Testis (tissue), 5 donors: ENCODE measurements at regions of chr2 and their contacts with region 1.

Region 1: DNA sequence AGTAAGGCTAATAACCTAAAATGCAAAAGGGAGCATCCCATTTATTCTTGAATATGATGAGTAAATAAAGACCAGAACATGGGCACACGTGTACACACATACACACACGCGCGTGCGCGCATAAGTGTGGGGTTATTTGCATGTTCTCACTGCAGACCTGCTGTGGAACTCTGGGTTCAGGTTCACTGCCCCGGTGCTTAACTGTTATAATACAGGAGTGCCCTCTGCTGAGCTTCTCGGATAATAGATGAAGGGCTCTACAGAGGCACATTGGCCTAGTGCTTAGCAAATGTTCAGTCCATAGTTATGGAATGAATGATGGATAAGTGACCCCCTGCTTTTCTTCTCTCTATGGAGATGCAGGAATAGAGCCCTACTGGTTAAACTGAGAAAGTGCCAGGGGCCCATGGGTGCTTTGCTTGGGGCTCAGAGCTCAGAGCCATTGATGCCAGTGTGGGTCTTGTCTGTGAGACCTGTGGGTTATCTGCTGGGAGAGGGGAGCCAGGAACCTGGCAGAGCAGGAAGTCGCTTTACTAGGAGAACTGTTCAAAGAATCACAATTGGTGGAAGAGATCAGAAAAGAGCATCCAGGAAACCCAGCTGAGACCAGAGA is 3.6 kb upstream of the ARL4C start:
- DNase-seq: peak; percentile 63
- H3K4me3 ChIP-seq: no peak overlapping the region
- H3K27ac ChIP-seq: no peak overlapping the region
- H3K4me1 ChIP-seq: no peaks in the 10 kb centered on the region
- H3K27me3 ChIP-seq: no peaks in the 10 kb centered on the region
- CTCF ChIP-seq: no peak
- POLR2A ChIP-seq: no peak

Region 2: DNA sequence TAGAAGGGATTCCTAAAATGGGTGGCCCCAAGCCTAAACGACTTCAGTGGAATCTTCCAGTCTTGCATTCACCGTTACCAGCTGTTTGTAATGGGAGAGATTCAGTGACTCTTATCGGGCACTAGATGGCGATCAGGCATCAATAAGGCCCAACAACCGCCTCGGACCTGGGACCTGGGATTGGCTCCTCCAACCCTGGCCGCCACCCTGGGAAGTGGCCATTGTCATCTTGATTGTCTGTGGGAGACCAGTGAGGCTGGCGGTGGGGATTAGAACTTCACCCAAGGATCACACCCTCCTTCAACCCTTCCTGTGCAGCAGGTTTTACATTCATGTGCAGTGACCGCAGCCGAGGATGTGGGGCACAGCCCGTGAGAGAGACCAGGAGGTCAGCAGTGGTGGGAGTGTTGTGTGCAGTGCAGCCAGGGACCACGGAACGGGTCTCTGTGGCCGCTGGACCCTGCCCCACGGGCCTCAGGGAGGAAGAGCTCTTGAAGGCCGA is 364.7 kb before region 1 on chr2:
- intact Hi-C with region 1: loop called (anchors 10 kb)
- DNase-seq: peak; percentile 67
- H3K4me3 ChIP-seq: no peak overlapping the region
- H3K27ac ChIP-seq: no peak overlapping the region
- H3K4me1 ChIP-seq: no peaks in the 10 kb centered on the region
- H3K27me3 ChIP-seq: no peaks in the 10 kb centered on the region
- CTCF ChIP-seq: peak; percentile 31 to 56 (median 56)
- POLR2A ChIP-seq: no peak